CD4-positive, alpha-beta T cell (primary cell): ENCODE measurements at regions of chr5 and their contacts with region 1.

Region 1: GRCh38 chr5:87405472-87406155 is 7.1 kb downstream of the CCNH start:
- DNase-seq: no peak
- ATAC-seq: no peak
- H3K4me3 ChIP-seq: no peak overlapping the region
- H3K4me3 Mint-ChIP-seq: no peak overlapping the region
- H3K27ac ChIP-seq: no peak overlapping the region
- H3K27ac Mint-ChIP-seq: peak overlapping the region; percentile 5
- H3K4me1 ChIP-seq: peaks cover 8% of the 10 kb centered on the region
- H3K4me1 Mint-ChIP-seq: peaks cover 59% of the 10 kb centered on the region
- H3K27me3 ChIP-seq: no peaks in the 10 kb centered on the region
- H3K27me3 Mint-ChIP-seq: no peaks in the 10 kb centered on the region
- CTCF ChIP-seq: no peak

Region 2: DNA sequence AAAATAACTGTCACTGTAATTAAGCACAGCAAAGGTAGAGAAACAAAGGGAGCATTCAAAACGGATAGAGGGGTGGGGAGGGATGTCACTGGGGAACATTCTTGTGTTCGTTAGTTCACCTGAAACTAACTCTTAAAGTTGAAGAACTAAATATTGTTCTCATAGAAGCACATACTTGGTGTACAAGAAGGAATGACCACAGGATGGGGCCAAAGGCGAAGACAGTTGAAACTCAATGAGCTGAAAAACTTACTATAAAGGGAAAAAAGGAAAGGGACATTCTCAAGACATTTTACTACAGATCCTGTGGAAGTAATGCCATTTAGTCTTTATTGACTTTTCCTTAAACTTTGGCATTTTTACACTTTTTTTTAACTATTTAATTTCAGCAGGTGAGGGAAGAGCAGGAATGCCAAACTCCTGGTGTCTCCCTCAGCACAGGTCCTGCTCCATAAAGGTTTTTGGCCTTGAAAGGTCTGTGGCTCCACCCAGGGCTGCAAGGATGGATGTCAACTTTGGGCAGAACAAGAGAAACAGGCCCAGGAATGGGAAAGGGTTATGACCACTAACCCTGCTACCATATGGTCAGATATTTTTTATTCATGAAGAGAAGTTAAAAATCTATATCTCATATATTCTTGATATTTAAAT is 335.5 kb before region 1 on chr5:
- CTCF ChIA-PET with region 1: no interaction called
- POLR2A ChIA-PET with region 1: interaction called, 4 read pairs
- intact Hi-C with region 1: loop called in 1 of 2 experiments (anchors 2 kb)
- DNase-seq: peak in 4 of 14 experiments; percentile 19 to 27 (median 26)
- ATAC-seq: no peak
- H3K4me3 ChIP-seq: no peak overlapping the region
- H3K4me3 Mint-ChIP-seq: no peak overlapping the region
- H3K27ac ChIP-seq: no peak overlapping the region
- H3K27ac Mint-ChIP-seq: no peak overlapping the region
- H3K4me1 ChIP-seq: peaks cover 7% of the 10 kb centered on the region
- H3K4me1 Mint-ChIP-seq: peaks cover 19% of the 10 kb centered on the region
- H3K27me3 ChIP-seq: no peaks in the 10 kb centered on the region
- H3K27me3 Mint-ChIP-seq: no peaks in the 10 kb centered on the region
- CTCF ChIP-seq: no peak

Region 3: DNA sequence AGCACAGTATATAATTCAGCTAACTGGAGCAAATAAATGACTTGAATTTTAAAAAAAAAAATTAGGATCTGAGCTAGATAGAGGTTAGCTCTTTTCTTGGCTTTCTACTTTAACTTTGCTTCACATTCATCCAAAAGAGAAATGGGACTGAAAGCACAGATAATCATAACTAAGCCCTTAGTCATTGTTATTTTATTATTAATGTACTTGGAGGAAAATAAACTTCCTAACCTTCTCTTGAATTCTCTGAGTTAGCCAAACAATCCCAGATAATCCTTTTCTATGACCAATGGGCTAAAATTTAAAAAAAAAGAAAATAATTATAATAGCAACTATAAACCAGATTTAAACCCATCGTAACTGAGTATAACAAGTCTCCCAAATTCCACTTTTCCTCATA is 195.5 kb before region 1 on chr5:
- CTCF ChIA-PET with region 1: no interaction called
- POLR2A ChIA-PET with region 1: no interaction called
- intact Hi-C with region 1: no loop called
- DNase-seq: no peak
- ATAC-seq: no peak
- H3K4me3 ChIP-seq: no peak overlapping the region
- H3K4me3 Mint-ChIP-seq: no peak overlapping the region
- H3K27ac ChIP-seq: no peak overlapping the region
- H3K27ac Mint-ChIP-seq: no peak overlapping the region
- H3K4me1 ChIP-seq: no peaks in the 10 kb centered on the region
- H3K4me1 Mint-ChIP-seq: peaks cover 16% of the 10 kb centered on the region
- H3K27me3 ChIP-seq: no peaks in the 10 kb centered on the region
- H3K27me3 Mint-ChIP-seq: no peaks in the 10 kb centered on the region
- CTCF ChIP-seq: no peak

Region 4: DNA sequence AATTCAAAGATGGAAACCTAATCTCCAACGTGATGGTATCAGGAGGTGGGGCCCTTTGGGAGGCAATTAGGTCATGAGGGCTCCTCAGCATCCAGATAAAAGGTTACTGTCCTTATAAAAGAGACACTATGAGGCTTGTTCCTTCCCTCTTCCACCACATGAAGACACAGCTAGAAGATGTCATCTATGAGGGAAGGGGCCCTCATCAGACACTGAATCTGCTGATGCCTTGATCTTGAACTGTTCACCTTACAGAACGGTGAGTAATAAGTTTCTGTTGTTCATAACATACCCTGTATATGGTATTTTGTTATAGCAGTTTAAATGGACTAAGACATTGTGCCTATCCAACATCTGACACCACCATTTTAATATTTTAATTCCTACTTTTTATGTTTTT is 26.8 kb after region 1 on chr5:
- CTCF ChIA-PET with region 1: no interaction called
- POLR2A ChIA-PET with region 1: no interaction called
- intact Hi-C with region 1: no loop called
- DNase-seq: no peak
- ATAC-seq: peak; percentile 29
- H3K4me3 ChIP-seq: no peak overlapping the region
- H3K4me3 Mint-ChIP-seq: no peak overlapping the region
- H3K27ac ChIP-seq: no peak overlapping the region
- H3K27ac Mint-ChIP-seq: no peak overlapping the region
- H3K4me1 ChIP-seq: no peaks in the 10 kb centered on the region
- H3K4me1 Mint-ChIP-seq: no peaks in the 10 kb centered on the region
- H3K27me3 ChIP-seq: no peaks in the 10 kb centered on the region
- H3K27me3 Mint-ChIP-seq: peaks cover 22% of the 10 kb centered on the region
- CTCF ChIP-seq: no peak